Activated CD8-positive, alpha-beta memory T cell treated with anti-CD3 and anti-CD28 coated beads, Interleukin-2, amount 10 ng/mL, durations not matched to agents 7 days and 5 days (primary cell): ENCODE measurements at regions of chr3 and their contacts with region 1.

Region 1: DNA sequence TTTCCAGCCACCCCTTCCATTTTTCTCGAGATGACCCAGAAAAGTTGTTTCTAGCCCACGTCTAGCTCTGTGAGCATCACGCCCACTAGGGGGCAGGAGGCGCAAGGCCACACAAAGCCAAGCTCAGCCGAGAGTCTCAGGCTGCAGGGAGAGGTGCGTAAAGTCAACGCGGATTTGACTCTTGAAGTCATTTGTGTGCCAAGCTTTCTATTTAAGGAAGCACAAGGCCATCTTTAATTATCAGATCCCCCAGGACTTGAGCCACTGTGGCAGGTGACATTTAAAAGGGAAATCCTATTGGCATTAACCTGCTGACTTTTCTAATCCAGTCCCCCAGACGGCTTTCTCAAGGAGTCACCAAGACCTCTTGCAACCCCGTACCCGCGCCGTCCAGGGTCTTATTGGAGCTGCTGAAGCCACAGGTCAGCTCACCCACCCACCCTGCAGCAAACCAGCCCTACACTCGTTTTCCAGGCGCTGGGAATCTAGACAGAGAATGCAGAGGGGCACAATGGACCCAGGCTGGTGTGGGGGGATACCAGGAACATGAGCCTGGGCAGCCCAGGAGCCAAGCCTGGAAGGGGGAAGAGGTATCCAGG is 62.1 kb downstream of the CAPN7 start:
- DNase-seq: peak; percentile 91
- ATAC-seq: peak; percentile 66
- H3K4me3 Mint-ChIP-seq: no peak overlapping the region
- H3K27ac Mint-ChIP-seq: peak overlapping the region; percentile 21
- H3K4me1 Mint-ChIP-seq: peaks cover 66% of the 10 kb centered on the region
- H3K27me3 Mint-ChIP-seq: no peaks in the 10 kb centered on the region

Region 2: GRCh38 chr3:15074493-15074892 is 193.6 kb before region 1 on chr3:
- CTCF ChIA-PET with region 1: no interaction called
- DNase-seq: no peak
- ATAC-seq: no peak
- H3K4me3 Mint-ChIP-seq: no peak overlapping the region
- H3K27ac Mint-ChIP-seq: no peak overlapping the region
- H3K4me1 Mint-ChIP-seq: no peaks in the 10 kb centered on the region
- H3K27me3 Mint-ChIP-seq: no peaks in the 10 kb centered on the region

Region 3: DNA sequence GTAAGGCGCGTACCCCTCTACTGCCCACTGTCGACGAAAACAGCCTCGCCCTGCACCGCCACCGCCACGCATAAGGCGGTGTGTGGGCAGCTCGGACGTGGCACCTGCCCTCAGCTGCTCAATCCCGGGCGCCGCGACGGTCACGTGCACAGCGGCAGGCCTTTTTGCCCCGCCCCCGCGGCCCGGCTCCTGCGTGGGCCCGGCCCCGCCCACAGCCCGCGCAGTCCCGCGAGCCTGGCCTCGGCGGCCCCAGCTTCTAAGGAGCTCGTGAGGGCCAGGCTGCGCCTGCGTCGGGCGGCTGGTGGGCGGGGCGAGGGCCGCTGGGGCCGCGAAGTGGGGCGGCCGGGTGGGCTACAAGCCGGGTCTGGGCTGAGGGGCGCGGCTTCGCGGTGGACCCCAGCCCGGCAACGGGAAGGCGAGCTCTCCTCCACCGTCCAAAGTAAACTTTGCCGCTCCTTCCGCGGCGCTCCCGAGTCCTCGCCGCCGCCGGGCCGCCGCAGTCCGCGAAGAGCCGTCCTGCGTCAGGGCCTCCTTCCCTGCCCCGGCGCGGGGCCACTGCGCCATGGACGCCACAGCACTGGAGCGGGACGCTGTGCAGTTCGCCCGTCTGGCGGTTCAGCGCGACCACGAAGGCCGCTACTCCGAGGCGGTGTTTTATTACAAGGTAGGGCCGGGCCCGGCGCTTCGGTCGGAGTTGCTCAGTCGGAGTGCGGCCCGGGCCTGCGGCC is 62.0 kb before region 1 on chr3 and contains the start of gene CAPN7:
- CTCF ChIA-PET with region 1: interaction called, 93 read pairs
- DNase-seq: peak; percentile 95
- ATAC-seq: peak; percentile 93
- H3K4me3 Mint-ChIP-seq: peak within 1 kb of the TSS; percentile 81
- H3K27ac Mint-ChIP-seq: peak within 1 kb of the TSS; percentile 85
- H3K4me1 Mint-ChIP-seq: peaks cover 26% of the 10 kb centered on the region
- H3K27me3 Mint-ChIP-seq: no peaks in the 10 kb centered on the region
- total RNA-seq, gene CAPN7: 28.1 to 28.4 TPM

Region 4: DNA sequence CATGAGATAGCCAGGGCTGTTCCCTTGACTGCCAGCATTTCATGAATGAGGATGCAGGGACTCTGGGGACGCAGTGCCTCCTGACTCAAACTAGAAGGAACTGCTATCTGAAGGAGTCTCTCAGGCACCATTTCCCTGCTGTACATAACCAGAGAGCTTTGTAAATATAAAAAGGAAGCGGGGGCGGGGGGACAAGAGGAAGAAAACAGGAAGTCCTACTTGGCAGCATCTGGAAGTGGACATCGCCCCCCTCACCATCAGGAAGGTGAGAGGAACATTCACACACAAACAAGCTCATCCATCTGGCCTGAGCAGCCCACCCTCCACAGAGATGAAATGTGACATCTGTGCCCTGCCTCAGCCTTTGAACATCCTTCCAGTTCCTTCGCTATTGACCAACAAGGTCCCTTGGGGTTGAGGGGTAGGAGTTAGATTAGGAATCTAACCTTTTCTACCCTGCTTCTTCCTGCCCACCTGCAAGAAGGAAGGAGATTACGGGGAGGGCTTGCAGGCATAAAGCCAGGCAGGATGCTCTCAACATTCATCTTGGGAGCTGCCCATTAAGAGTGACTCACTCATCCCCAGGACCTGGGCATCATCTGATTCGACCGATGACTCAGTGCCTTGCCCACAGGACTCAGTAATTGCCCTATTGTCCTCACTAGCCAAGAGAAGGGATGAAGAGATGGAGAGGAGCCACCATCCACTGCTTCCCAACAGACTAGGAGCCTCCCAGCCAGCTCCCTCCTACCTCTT is 32.4 kb after region 1 on chr3:
- CTCF ChIA-PET with region 1: interaction called, 19 read pairs
- DNase-seq: no peak
- ATAC-seq: no peak
- H3K4me3 Mint-ChIP-seq: no peak overlapping the region
- H3K27ac Mint-ChIP-seq: peak overlapping the region; percentile 11
- H3K4me1 Mint-ChIP-seq: peaks cover 75% of the 10 kb centered on the region
- H3K27me3 Mint-ChIP-seq: no peaks in the 10 kb centered on the region

Region 5: DNA sequence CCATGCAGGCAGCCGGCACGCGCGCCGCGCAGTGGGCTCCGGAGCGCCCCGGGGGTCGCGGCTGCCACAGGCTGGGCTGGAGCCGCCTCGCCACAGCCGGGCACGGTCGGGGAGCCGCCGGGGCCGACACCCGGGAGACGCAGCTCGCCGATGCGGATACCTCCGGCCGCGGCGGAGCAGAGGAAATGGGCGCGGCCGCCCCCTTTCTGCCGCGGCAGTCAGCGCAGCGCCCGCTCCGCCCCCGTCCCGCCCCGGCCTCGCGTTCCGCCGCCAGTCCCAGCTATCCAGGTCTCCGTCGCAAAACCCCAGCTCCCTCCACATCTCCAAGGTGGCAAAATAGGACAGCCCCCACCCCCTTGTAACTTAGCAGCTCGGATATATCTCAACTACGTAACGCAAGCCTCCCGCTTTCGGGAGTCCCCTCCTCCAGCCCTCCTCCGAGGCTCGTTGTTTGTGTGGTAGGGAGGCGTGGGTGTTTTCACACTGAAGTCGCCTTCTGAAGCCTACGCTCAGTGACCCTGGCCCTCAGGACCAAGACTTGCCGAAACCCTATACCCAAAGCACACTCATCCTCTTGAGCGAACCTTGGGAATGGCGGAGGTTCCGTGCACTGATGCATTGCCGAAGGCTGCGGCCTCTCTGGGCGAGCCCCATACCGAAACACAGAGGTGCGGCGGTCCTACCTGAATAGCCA is 64.4 kb after region 1 on chr3 and contains the start of gene SH3BP5:
- CTCF ChIA-PET with region 1: interaction called, 108 read pairs
- DNase-seq: peak; percentile 79
- ATAC-seq: peak; percentile 96
- H3K4me3 Mint-ChIP-seq: peak within 1 kb of the TSS; percentile 83
- H3K27ac Mint-ChIP-seq: peak within 1 kb of the TSS; percentile 77
- H3K4me1 Mint-ChIP-seq: peaks cover 50% of the 10 kb centered on the region
- H3K27me3 Mint-ChIP-seq: no peaks in the 10 kb centered on the region
- total RNA-seq, gene SH3BP5: 19.4 to 30.3 TPM

Region 6: GRCh38 chr3:15361494-15362212 is 93.5 kb after region 1 on chr3:
- CTCF ChIA-PET with region 1: interaction called, 30 read pairs
- DNase-seq: peak; percentile 72
- ATAC-seq: peak; percentile 69
- H3K4me3 Mint-ChIP-seq: peak overlapping the region; percentile 29
- H3K27ac Mint-ChIP-seq: peak overlapping the region; percentile 68
- H3K4me1 Mint-ChIP-seq: peaks cover 42% of the 10 kb centered on the region
- H3K27me3 Mint-ChIP-seq: no peaks in the 10 kb centered on the region

Region 7: GRCh38 chr3:15384510-15385237 is 116.5 kb after region 1 on chr3:
- CTCF ChIA-PET with region 1: interaction called, 145 read pairs
- DNase-seq: no peak
- ATAC-seq: no peak
- H3K4me3 Mint-ChIP-seq: no peak overlapping the region
- H3K27ac Mint-ChIP-seq: no peak overlapping the region
- H3K4me1 Mint-ChIP-seq: peaks cover 4% of the 10 kb centered on the region
- H3K27me3 Mint-ChIP-seq: no peaks in the 10 kb centered on the region

Region 8: DNA sequence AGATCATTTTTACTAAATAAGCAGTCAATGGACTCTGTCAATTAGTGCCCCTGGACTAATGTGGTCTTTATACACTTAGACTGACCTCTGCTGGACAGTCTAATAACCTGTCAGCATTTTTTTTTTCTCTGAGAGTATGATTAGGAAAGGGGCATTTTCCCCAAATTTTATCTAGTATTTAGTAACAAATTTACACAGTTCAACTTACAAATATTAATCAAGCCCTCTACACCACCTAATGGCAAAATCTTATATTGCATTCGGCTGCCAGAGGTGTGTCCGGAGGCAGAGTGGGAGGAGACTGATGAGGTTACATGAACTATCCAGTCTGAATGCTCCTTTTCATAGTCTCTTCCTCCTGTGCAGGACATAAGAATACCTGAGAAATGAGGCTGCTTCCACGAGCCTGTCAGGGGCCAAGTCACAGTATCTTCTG is 289.4 kb after region 1 on chr3:
- CTCF ChIA-PET with region 1: interaction called, 55 read pairs
- DNase-seq: peak; percentile 86
- ATAC-seq: peak; percentile 97
- H3K4me3 Mint-ChIP-seq: no peak overlapping the region
- H3K27ac Mint-ChIP-seq: peak overlapping the region; percentile 66
- H3K4me1 Mint-ChIP-seq: peaks cover 21% of the 10 kb centered on the region
- H3K27me3 Mint-ChIP-seq: no peaks in the 10 kb centered on the region